ENCODE measurements at regions of chr13 and their contacts with region 1.

Region 1: DNA sequence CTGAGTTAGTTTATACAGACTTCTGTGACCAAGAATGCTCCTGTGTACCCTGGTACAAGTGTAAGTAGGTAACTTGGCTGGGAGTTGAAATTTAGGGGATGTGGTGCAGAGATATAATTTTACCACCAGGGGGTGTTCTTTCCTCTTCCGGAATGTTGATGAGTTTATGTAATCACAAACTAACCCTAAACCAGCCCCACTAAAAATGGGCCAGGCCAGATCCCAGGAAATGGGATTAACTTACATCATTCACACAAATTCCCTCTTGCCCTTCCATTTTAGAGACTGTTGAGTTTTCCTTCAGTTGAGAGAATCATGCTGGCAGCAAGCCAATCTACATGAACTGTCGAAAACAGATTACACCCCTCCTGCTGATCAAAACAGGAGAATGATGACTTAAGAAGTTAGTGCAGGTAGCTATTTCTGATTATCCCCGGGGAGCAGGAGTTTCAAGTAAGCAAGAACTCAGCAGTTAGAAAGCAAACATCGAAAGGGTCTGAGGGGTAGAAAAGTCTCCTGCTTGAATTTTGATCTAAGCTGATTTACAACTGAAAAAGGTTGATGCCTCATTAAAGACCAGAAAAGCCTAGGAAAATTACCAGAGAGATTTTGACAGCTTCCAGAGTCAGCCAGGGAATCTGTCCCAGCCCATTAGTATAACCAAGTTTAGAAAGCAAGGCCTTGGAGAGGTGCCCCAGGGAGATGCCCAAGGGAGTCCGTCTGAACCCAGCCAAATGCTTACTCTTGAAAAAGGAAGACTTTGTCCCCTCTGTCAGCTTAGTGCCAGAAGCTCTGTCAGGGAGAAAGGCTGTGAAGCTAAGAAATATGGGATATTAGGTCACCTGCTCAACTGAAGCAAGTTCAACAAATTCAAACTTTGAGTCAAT is 32.3 kb upstream of the MED4 start:
- DNase-seq: peak; percentile 14
- H3K4me3 ChIP-seq: no peak overlapping the region
- H3K27me3 ChIP-seq: no peaks in the 10 kb centered on the region
- CTCF ChIP-seq: peak; percentile 66

Region 2: DNA sequence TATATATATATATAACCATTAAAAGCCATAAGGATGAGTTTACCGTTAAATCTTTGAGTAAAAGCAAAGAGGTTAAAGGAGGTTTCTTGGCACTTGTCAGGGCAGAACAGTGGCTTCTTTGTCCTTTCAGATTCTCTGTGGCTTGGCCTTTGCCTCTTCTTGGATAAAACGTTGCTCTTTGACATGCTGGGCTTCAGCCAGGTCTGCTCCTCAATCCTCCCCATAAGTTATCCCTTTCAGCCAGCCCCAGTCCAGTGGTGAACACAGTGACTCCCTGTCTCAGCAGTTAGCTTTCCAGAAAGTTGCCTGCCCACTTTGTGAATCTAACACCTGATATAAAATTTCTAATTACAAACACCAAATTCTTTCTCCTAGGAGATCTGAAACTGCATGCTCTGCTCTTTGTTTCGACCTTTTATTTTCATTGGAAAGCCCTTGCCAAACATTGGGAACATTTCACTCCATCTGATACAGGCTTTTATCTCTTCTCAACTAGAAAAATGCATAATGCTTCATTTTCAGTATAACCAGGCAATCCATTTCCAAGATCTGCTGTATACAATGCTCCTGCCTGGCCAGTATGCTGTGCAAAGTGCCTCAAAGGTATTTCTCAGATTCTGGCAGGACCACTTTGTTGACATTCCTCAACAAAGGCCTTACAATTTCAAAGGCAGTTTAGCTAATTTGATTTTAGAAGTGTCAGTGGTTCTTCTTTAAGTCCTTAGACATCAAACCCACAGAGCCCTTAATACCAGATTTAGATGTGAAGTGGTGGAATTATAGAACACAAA is 16.1 kb before region 1 on chr13:
- CTCF ChIA-PET with region 1: interaction called, 11 read pairs
- POLR2A ChIA-PET with region 1: no interaction called
- DNase-seq: no peak
- H3K4me3 ChIP-seq: no peak overlapping the region
- H3K27me3 ChIP-seq: no peaks in the 10 kb centered on the region
- CTCF ChIP-seq: no peak

Measured in BJ (cell line).